MCF 10A (cell line): ENCODE measurements at regions of chr1 and their contacts with region 1.

Region 1: GRCh38 chr1:65687428-65688214 is 105.1 kb upstream of the PDE4B start:
- DNase-seq: peak; percentile 81
- H3K4me3 Mint-ChIP-seq: no peak overlapping the region
- H3K27ac Mint-ChIP-seq: no peak overlapping the region
- H3K4me1 Mint-ChIP-seq: no peaks in the 10 kb centered on the region
- H3K27me3 Mint-ChIP-seq: no peaks in the 10 kb centered on the region
- CTCF ChIP-seq: peak; percentile 92

Region 2: GRCh38 chr1:65075123-65075976 is 612.3 kb before region 1 on chr1:
- CTCF ChIA-PET with region 1: interaction called, 10 read pairs
- POLR2A ChIA-PET with region 1: no interaction called
- intact Hi-C with region 1: loop called (anchors 5 kb)
- DNase-seq: peak; percentile 71
- H3K4me3 Mint-ChIP-seq: no peak overlapping the region
- H3K27ac Mint-ChIP-seq: no peak overlapping the region
- H3K4me1 Mint-ChIP-seq: peaks cover 5% of the 10 kb centered on the region
- H3K27me3 Mint-ChIP-seq: no peaks in the 10 kb centered on the region
- CTCF ChIP-seq: peak; percentile 48

Region 3: GRCh38 chr1:65235867-65236805 is 451.5 kb before region 1 on chr1:
- CTCF ChIA-PET with region 1: interaction called, 78 read pairs
- POLR2A ChIA-PET with region 1: no interaction called
- intact Hi-C with region 1: loop called (anchors 1 kb)
- DNase-seq: peak; percentile 72
- H3K4me3 Mint-ChIP-seq: no peak overlapping the region
- H3K27ac Mint-ChIP-seq: no peak overlapping the region
- H3K4me1 Mint-ChIP-seq: peaks cover 2% of the 10 kb centered on the region
- H3K27me3 Mint-ChIP-seq: no peaks in the 10 kb centered on the region
- CTCF ChIP-seq: peak; percentile 68

Region 4: GRCh38 chr1:65437616-65438015 is 250.0 kb before region 1 on chr1:
- CTCF ChIA-PET with region 1: interaction called, 19 read pairs
- POLR2A ChIA-PET with region 1: no interaction called
- intact Hi-C with region 1: no loop called
- DNase-seq: no peak
- H3K4me3 Mint-ChIP-seq: no peak overlapping the region
- H3K27ac Mint-ChIP-seq: no peak overlapping the region
- H3K4me1 Mint-ChIP-seq: peaks cover 26% of the 10 kb centered on the region
- H3K27me3 Mint-ChIP-seq: no peaks in the 10 kb centered on the region
- CTCF ChIP-seq: no peak

Region 5: DNA sequence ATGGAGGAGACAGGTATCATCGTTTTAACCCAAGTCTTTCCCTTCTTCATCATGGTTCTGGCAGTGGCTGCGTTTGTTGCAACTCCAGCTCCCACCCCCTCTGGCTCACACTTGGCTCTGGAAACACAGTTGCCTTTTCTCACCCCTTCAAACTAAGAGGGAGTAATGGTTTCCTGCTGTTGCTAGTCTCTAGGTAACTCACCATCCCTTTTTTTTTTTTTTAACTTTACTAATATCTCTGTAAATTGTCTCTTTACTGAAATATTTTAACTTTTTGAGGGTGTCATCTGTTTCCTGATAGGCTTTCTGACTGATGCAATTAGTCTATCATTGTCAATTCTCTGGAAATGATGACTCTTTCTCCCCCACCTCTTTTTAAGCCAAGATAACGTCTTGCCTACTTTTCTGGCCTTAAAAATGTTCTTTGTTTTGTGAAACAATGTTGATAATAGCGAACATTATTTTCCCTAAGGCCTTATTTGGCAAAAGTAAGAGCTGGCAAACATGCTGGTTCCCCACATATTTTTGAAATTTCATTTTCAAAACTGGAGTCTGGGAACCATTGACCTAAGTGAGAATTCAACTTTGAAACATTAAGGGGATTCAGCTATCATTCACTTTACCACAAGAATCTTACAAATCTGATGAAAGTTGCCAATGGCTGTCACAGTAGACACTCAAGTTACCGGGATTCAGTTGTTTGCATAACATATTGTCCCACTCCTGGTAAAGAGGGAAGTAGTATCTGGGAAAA is 181.9 kb before region 1 on chr1:
- CTCF ChIA-PET with region 1: no interaction called
- POLR2A ChIA-PET with region 1: no interaction called
- intact Hi-C with region 1: no loop called
- DNase-seq: no peak
- H3K4me3 Mint-ChIP-seq: no peak overlapping the region
- H3K27ac Mint-ChIP-seq: no peak overlapping the region
- H3K4me1 Mint-ChIP-seq: peaks cover 12% of the 10 kb centered on the region
- H3K27me3 Mint-ChIP-seq: no peaks in the 10 kb centered on the region
- CTCF ChIP-seq: no peak

Region 6: GRCh38 chr1:65698590-65698989 is 11.0 kb after region 1 on chr1:
- CTCF ChIA-PET with region 1: interaction called, 25 read pairs
- POLR2A ChIA-PET with region 1: no interaction called
- intact Hi-C with region 1: no loop called
- DNase-seq: no peak
- H3K4me3 Mint-ChIP-seq: no peak overlapping the region
- H3K27ac Mint-ChIP-seq: no peak overlapping the region
- H3K4me1 Mint-ChIP-seq: no peaks in the 10 kb centered on the region
- H3K27me3 Mint-ChIP-seq: peaks cover 63% of the 10 kb centered on the region
- CTCF ChIP-seq: no peak

Region 7: GRCh38 chr1:65799601-65800000 is 112.0 kb after region 1 on chr1:
- CTCF ChIA-PET with region 1: no interaction called
- POLR2A ChIA-PET with region 1: no interaction called
- intact Hi-C with region 1: no loop called
- DNase-seq: no peak
- H3K4me3 Mint-ChIP-seq: no peak overlapping the region
- H3K27ac Mint-ChIP-seq: no peak overlapping the region
- H3K4me1 Mint-ChIP-seq: no peaks in the 10 kb centered on the region
- H3K27me3 Mint-ChIP-seq: peaks cover 59% of the 10 kb centered on the region
- CTCF ChIP-seq: no peak

Region 8: GRCh38 chr1:65921446-65921845 is 233.8 kb after region 1 on chr1:
- CTCF ChIA-PET with region 1: no interaction called
- POLR2A ChIA-PET with region 1: no interaction called
- intact Hi-C with region 1: no loop called
- DNase-seq: no peak
- H3K4me3 Mint-ChIP-seq: no peak overlapping the region
- H3K27ac Mint-ChIP-seq: no peak overlapping the region
- H3K4me1 Mint-ChIP-seq: no peaks in the 10 kb centered on the region
- H3K27me3 Mint-ChIP-seq: no peaks in the 10 kb centered on the region
- CTCF ChIP-seq: no peak